Activated CD8-positive, alpha-beta T cell treated with anti-CD3 and anti-CD28 coated beads, Interleukin-2, amount 10 ng/mL, durations not matched to agents 7 days and 5 days (primary cell): ENCODE measurements at regions of chr14 and their contacts with region 1.

Region 1: DNA sequence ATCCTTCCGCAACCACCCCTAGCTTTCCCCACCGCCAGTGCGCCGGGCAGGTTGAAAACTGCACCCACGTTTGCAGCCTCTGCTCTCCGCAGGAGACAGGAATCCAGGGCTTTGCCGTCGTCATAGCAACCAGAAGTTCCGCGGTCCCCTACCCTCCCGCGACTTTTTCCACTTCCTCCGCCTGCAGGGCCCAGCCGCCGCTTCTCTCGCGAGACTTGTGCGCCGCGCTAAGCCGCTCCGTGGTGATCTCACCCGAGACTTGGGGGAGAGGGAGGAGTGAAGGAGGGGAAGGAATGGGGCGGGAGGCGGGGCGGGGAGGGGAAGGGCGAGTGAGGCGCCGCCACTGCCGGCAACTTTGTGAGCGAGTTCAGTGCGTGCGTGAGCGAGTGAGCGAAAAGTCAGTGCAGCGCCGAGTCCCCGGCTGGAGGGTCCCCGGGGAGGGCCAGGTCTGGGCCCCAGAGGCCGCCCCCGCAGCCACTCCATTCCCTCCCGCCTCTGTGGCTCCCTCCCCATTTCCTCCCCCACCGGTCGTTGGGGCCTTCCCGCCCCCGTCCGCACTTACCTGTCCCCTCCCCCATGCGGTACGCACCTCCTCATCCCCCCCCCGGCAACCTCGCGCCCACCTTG is 413.0 kb downstream of the PCNX1 start:
- DNase-seq: peak; percentile 99
- ATAC-seq: peak; percentile 85
- H3K4me3 Mint-ChIP-seq: peak within 1 kb of the TSS; percentile 89
- H3K27ac Mint-ChIP-seq: peak within 1 kb of the TSS; percentile 86
- H3K4me1 Mint-ChIP-seq: peaks cover 44% of the 10 kb centered on the region
- H3K27me3 Mint-ChIP-seq: peaks cover 3% of the 10 kb centered on the region

Region 2: GRCh38 chr14:71029236-71029781 is 290.9 kb before region 1 on chr14:
- CTCF ChIA-PET with region 1: no interaction called
- POLR2A ChIA-PET with region 1: no interaction called
- DNase-seq: no peak
- ATAC-seq: no peak
- H3K4me3 Mint-ChIP-seq: no peak overlapping the region
- H3K27ac Mint-ChIP-seq: no peak overlapping the region
- H3K4me1 Mint-ChIP-seq: no peaks in the 10 kb centered on the region
- H3K27me3 Mint-ChIP-seq: no peaks in the 10 kb centered on the region

Region 3: DNA sequence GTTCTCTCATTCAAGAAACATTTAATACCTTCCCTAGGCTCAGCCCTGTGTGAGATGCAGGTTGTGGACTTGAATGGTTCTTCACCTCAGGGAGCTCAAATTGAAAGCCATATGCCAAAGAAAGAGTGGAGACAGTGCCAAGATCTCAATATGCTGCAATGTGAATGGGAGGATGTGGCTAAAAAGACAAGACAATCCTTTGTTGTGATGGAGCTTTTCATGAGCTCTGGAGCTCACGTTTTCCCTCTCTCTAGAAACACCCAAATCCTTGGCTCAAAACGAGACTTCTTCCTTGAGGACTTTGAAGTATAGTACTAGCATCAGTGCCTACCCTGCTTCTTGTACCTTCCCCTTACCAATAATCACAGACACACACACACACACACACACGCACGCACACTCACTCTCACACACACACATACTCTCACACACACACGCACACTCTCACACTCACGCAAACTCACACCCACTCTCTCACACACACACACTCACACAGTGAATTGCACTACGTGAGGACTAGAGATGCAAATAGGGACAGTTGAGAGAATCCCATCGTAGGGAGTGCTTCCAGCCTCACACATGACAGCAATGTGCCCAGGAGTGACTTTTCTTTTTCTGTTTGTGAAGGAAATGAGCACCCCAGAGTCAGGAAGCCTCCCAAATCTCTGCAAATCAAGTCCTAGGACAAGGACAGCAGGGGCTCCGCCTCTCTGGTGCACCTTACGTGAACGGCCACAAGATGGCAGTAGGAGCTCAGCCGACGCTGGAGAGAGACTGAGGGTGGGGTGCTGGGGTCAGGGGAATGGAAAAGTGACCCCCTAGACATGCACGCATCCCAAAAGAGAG is 181.5 kb before region 1 on chr14:
- CTCF ChIA-PET with region 1: interaction called, 34 read pairs
- POLR2A ChIA-PET with region 1: interaction called, 49 read pairs
- DNase-seq: peak; percentile 67
- ATAC-seq: peak; percentile 20
- H3K4me3 Mint-ChIP-seq: no peak overlapping the region
- H3K27ac Mint-ChIP-seq: peak overlapping the region; percentile 5
- H3K4me1 Mint-ChIP-seq: peaks cover 52% of the 10 kb centered on the region
- H3K27me3 Mint-ChIP-seq: no peaks in the 10 kb centered on the region

Region 4: DNA sequence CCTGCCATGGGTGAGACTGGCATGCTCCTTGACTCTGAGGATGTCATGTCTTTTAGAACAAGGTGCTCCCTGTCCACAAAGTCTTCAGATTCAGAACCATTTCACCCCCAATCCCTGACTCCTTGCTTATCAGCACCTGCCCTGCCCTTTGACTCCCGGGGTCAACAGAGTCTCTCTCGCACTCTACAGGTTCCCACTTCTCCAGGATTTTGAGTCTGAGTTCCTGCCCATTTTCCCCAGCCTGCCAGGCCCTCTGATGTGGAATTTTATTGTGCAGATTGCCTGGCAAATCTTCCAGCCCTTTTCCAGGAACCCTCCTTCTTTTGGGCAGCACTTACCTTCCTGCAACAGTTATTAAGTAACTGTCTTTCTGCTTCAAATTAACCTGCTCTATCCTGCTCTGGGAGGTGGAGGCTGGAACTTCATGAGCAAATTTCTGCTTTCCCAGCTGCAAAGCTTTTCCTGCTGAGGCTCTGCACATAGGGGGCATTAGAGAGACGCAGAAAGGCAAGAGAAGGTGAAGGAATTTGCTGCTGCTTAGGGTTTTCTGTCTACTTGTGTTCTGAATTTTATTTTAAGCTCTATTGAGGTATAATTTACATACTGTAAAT is 153.9 kb before region 1 on chr14:
- CTCF ChIA-PET with region 1: interaction called, 11 read pairs
- POLR2A ChIA-PET with region 1: interaction called, 7 read pairs
- DNase-seq: no peak
- ATAC-seq: no peak
- H3K4me3 Mint-ChIP-seq: no peak overlapping the region
- H3K27ac Mint-ChIP-seq: no peak overlapping the region
- H3K4me1 Mint-ChIP-seq: peaks cover 24% of the 10 kb centered on the region
- H3K27me3 Mint-ChIP-seq: peaks cover 24% of the 10 kb centered on the region

Region 5: GRCh38 chr14:71384007-71384845 is 64.0 kb after region 1 on chr14:
- CTCF ChIA-PET with region 1: no interaction called
- POLR2A ChIA-PET with region 1: no interaction called
- DNase-seq: no peak
- ATAC-seq: no peak
- H3K4me3 Mint-ChIP-seq: no peak overlapping the region
- H3K27ac Mint-ChIP-seq: no peak overlapping the region
- H3K4me1 Mint-ChIP-seq: peaks cover 12% of the 10 kb centered on the region
- H3K27me3 Mint-ChIP-seq: no peaks in the 10 kb centered on the region

Region 6: DNA sequence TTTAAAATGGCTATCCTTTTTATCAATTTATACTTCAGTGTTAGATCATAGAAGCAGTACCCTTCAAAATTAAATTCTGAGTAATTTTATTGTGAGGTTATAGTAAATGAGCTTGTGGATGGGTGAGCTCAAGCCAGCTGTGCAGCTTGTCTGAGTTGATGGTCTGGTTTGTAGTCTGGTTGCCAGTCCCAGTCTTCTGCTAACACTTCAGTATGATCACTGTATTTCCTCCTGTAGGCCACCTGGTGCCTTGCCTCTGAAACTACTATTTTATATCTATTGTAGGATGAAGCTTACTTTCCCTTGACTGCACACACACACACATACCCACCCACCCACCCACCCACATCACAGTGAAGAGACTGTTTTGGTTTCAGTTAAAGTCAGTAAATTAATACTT is 83.4 kb after region 1 on chr14:
- CTCF ChIA-PET with region 1: interaction called, 150 read pairs
- POLR2A ChIA-PET with region 1: interaction called, 23 read pairs
- DNase-seq: peak; percentile 59
- ATAC-seq: peak; percentile 74
- H3K4me3 Mint-ChIP-seq: no peak overlapping the region
- H3K27ac Mint-ChIP-seq: peak overlapping the region; percentile 36
- H3K4me1 Mint-ChIP-seq: peaks cover 31% of the 10 kb centered on the region
- H3K27me3 Mint-ChIP-seq: no peaks in the 10 kb centered on the region

Region 7: GRCh38 chr14:71555654-71556559 is 235.7 kb after region 1 on chr14:
- CTCF ChIA-PET with region 1: interaction called, 14 read pairs
- POLR2A ChIA-PET with region 1: interaction called, 6 read pairs
- DNase-seq: peak; percentile 77
- ATAC-seq: peak; percentile 94
- H3K4me3 Mint-ChIP-seq: peak overlapping the region; percentile 66
- H3K27ac Mint-ChIP-seq: peak overlapping the region; percentile 90
- H3K4me1 Mint-ChIP-seq: peaks cover 66% of the 10 kb centered on the region
- H3K27me3 Mint-ChIP-seq: no peaks in the 10 kb centered on the region

Region 8: DNA sequence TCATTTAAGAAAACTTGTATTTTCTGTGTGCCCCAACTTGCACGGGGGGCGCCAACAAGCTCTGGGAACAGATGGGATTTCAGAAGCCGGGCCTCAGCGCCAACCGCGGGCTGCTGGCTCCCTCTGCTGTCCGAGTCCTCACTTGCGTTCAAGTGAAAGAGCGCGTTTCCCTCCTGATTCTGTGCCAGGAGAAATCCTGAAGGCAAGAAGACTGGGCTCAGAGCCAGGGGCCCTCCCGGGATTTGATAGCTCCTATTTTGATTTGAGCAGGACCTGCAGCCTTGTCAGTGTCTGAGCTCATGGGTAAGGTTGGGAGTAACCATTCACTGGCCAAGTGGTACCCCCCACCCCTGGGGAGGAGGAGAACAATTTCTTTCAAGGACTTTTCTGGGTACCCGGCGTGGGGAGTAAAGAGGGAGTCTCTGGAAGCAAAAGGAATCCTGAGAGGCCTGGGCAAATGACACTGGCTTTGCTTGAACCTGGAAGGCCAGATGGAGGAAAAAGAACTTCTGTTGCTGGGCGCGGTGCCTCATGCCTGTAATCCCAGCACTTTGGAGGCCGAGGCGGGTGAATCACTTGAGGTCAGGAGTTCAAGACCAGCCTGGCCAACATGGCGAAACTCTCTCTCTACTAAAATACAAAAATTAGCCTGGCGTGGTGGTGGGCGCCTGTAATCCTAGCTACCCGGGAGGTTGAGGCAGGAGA is 433.1 kb after region 1 on chr14:
- CTCF ChIA-PET with region 1: interaction called, 17 read pairs
- POLR2A ChIA-PET with region 1: interaction called, 7 read pairs
- DNase-seq: peak; percentile 78
- ATAC-seq: peak; percentile 65
- H3K4me3 Mint-ChIP-seq: no peak overlapping the region
- H3K27ac Mint-ChIP-seq: no peak overlapping the region
- H3K4me1 Mint-ChIP-seq: peaks cover 19% of the 10 kb centered on the region
- H3K27me3 Mint-ChIP-seq: peaks cover 2% of the 10 kb centered on the region